Activated CD4-positive, alpha-beta memory T cell treated with anti-CD3 and anti-CD28 coated beads, Interleukin-2, amount 10 ng/mL, durations not matched to agents 7 days and 5 days (primary cell): ENCODE measurements at regions of chr1 and their contacts with region 1.

Region 1: GRCh38 chr1:35715568-35716002 is 3.1 kb downstream of the C1orf216 start:
- DNase-seq: peak; percentile 83
- H3K4me3 Mint-ChIP-seq: no peak overlapping the region
- H3K27ac Mint-ChIP-seq: peak overlapping the region; percentile 51
- H3K4me1 Mint-ChIP-seq: peaks cover 31% of the 10 kb centered on the region
- H3K27me3 Mint-ChIP-seq: no peaks in the 10 kb centered on the region

Region 2: DNA sequence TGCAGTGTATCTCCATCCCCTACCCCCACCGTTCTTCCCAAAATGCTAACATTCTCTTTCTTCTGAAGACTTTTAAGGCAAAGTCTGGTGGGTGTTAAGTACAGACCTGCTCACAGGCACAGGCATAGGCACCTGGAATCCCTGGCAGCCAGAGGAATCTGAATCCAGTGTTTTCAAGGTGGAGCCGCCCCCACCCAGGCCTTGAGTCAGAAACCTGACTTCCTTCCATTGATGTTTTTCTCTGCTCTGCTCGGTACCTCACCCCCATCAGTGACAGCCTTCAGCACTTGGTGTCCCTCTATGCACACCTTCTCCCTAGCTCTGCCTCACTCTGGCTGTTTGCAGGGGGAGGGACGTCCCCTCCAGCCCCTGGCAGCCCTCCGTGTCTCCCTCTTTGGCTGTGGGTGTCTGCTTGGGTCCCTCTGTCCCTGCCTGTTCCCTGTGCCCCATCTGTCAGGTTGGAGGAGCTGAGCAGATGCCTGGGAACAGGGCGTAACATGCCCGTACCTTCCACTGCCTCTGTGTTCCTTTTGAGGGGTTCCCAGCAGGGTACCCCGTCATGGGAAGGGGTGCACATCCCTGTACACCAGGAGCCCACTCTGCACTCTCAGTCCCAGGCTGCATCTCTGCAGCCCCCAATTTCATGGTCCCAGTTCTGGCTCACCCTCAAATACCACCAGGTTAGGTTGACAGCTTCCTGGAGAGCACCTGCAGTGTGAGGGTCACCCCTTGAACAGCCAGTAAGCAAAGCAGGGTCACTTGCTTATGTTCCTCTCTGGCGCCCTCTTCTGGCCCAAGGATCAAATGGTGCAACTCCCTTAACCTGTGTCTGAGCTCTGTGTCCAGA is 151.3 kb before region 1 on chr1:
- CTCF ChIA-PET with region 1: interaction called, 82 read pairs
- POLR2A ChIA-PET with region 1: interaction called, 12 read pairs
- DNase-seq: peak; percentile 85
- H3K4me3 Mint-ChIP-seq: no peak overlapping the region
- H3K27ac Mint-ChIP-seq: no peak overlapping the region
- H3K4me1 Mint-ChIP-seq: peaks cover 22% of the 10 kb centered on the region
- H3K27me3 Mint-ChIP-seq: no peaks in the 10 kb centered on the region

Region 3: DNA sequence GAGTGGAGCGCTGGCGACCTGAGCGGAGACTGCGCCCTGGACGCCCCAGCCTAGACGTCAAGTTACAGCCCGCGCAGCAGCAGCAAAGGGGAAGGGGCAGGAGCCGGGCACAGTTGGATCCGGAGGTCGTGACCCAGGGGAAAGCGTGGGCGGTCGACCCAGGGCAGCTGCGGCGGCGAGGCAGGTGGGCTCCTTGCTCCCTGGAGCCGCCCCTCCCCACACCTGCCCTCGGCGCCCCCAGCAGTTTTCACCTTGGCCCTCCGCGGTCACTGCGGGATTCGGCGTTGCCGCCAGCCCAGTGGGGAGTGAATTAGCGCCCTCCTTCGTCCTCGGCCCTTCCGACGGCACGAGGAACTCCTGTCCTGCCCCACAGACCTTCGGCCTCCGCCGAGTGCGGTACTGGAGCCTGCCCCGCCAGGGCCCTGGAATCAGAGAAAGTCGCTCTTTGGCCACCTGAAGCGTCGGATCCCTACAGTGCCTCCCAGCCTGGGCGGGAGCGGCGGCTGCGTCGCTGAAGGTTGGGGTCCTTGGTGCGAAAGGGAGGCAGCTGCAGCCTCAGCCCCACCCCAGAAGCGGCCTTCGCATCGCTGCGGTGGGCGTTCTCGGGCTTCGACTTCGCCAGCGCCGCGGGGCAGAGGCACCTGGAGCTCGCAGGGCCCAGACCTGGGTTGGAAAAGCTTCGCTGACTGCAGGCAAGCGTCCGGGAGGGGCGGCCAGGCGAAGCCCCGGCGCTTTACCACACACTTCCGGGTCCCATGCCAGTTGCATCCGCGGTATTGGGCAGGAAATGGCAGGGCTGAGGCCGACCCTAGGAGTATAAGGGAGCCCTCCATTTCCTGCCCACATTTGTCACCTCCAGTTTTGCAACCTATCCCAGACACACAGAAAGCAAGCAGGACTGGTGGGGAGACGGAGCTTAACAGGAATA is 138.2 kb before region 1 on chr1:
- CTCF ChIA-PET with region 1: interaction called, 34 read pairs
- POLR2A ChIA-PET with region 1: interaction called, 4 read pairs
- DNase-seq: peak; percentile 84
- H3K4me3 Mint-ChIP-seq: peak overlapping the region; percentile 80
- H3K27ac Mint-ChIP-seq: peak overlapping the region; percentile 79
- H3K4me1 Mint-ChIP-seq: peaks cover 32% of the 10 kb centered on the region
- H3K27me3 Mint-ChIP-seq: peaks cover 21% of the 10 kb centered on the region

Region 4: DNA sequence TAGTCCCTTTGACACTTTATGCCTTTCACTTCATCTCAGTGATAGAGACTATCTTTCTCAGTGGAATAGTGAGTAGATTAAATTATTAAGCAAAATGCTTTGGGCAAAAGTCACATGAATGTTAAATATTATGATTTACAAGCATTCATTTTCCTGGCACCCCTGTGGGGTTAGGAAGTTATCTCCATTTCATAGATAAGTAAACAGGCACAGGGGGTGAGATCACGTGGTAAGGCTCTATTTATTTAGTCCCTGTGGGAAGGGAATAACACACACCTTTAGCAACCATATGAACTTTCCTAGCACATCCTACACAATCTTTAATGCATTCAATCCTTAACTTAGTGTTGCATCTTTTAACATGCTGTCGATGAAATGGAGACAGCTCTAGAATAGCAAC is 86.5 kb before region 1 on chr1:
- CTCF ChIA-PET with region 1: interaction called, 10 read pairs
- POLR2A ChIA-PET with region 1: no interaction called
- DNase-seq: no peak
- H3K4me3 Mint-ChIP-seq: no peak overlapping the region
- H3K27ac Mint-ChIP-seq: no peak overlapping the region
- H3K4me1 Mint-ChIP-seq: peaks cover 5% of the 10 kb centered on the region
- H3K27me3 Mint-ChIP-seq: no peaks in the 10 kb centered on the region

Region 5: DNA sequence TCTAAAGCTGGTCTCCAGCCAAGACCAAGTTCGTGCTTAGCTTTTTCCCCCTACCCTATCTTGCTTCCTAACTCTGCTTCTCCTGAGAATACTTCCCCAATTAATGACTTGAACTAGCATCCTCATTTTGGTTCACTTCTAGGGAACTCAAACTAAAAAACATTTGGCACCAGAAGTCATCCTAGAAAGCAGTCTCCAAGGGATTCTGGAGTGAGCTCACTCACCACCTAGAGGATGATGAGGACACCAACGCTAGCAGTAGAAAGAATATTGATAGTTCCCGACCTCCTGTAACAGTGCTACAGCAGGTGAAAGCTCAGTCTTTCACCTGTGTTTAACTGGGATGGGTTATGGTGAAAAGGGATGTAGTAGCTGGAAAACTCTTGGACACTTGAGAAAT is 69.5 kb before region 1 on chr1:
- CTCF ChIA-PET with region 1: interaction called, 20 read pairs
- POLR2A ChIA-PET with region 1: no interaction called
- DNase-seq: no peak
- H3K4me3 Mint-ChIP-seq: no peak overlapping the region
- H3K27ac Mint-ChIP-seq: no peak overlapping the region
- H3K4me1 Mint-ChIP-seq: peaks cover 11% of the 10 kb centered on the region
- H3K27me3 Mint-ChIP-seq: peaks cover 52% of the 10 kb centered on the region

Region 6: GRCh38 chr1:35845766-35846165 is 130.2 kb after region 1 on chr1:
- CTCF ChIA-PET with region 1: no interaction called
- POLR2A ChIA-PET with region 1: no interaction called
- DNase-seq: no peak
- H3K4me3 Mint-ChIP-seq: no peak overlapping the region
- H3K27ac Mint-ChIP-seq: no peak overlapping the region
- H3K4me1 Mint-ChIP-seq: no peaks in the 10 kb centered on the region
- H3K27me3 Mint-ChIP-seq: no peaks in the 10 kb centered on the region